ENCODE measurements at regions of chr3 and their contacts with region 1.

Region 1: GRCh38 chr3:42012935-42013690 is 51.2 kb upstream of the ULK4 start:
- DNase-seq: peak; percentile 66
- H3K4me3 Mint-ChIP-seq: peak overlapping the region; percentile 87
- H3K27ac Mint-ChIP-seq: peak overlapping the region; percentile 91
- H3K4me1 Mint-ChIP-seq: peaks cover 47% of the 10 kb centered on the region
- H3K27me3 Mint-ChIP-seq: no peaks in the 10 kb centered on the region

Region 2: GRCh38 chr3:40309418-40309924 is 1703.6 kb before region 1 on chr3 and contains the start of gene EIF1B:
- intact Hi-C with region 1: loop called (anchors 1 kb)
- DNase-seq: peak; percentile 98
- H3K4me3 Mint-ChIP-seq: peak within 1 kb of the TSS; percentile 96
- H3K27ac Mint-ChIP-seq: peak within 1 kb of the TSS; percentile 95
- H3K4me1 Mint-ChIP-seq: peaks cover 28% of the 10 kb centered on the region
- H3K27me3 Mint-ChIP-seq: no peaks in the 10 kb centered on the region
- total RNA-seq, gene EIF1B: 49.1 and 49.6 TPM in 2 replicates

Region 3: DNA sequence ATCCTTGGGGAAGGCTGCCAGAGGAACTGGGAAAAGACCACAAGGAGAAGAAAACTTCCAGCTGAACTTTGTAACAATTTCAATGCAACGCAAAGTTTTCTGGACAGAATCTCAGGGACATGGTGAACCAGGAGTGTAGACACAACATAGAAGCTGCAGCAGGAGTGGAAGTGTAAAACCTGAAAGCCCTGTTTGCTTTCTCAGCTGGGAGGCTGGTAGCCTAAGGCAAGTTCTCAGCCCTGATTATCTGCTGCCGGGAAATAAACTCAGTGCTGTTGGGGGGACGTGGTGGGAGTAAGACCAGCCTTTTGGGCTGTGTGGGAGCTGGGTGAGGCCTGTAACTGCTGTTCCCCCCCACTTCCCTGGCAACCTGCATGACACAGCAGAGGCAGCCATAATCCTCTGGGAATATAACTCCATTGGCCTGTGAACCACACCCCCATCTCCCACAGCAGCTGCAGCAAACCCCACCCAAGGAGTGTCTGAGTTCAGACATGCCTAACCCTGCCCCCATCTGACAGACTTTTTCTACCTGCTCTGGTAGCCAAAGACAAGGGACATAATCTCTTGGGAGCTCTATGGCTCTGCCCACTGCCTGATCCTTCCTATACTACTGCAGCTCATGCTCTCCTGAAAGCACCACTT is 1381.6 kb before region 1 on chr3:
- intact Hi-C with region 1: no loop called
- DNase-seq: no peak
- H3K4me3 Mint-ChIP-seq: no peak overlapping the region
- H3K27ac Mint-ChIP-seq: no peak overlapping the region
- H3K4me1 Mint-ChIP-seq: no peaks in the 10 kb centered on the region
- H3K27me3 Mint-ChIP-seq: no peaks in the 10 kb centered on the region

Region 4: GRCh38 chr3:40971191-40972168 is 1041.6 kb before region 1 on chr3:
- intact Hi-C with region 1: loop called (anchors 1 kb)
- DNase-seq: peak; percentile 24
- H3K4me3 Mint-ChIP-seq: peak overlapping the region; percentile 62
- H3K27ac Mint-ChIP-seq: peak overlapping the region; percentile 97
- H3K4me1 Mint-ChIP-seq: peaks cover 64% of the 10 kb centered on the region
- H3K27me3 Mint-ChIP-seq: peaks cover 2% of the 10 kb centered on the region

Region 5: DNA sequence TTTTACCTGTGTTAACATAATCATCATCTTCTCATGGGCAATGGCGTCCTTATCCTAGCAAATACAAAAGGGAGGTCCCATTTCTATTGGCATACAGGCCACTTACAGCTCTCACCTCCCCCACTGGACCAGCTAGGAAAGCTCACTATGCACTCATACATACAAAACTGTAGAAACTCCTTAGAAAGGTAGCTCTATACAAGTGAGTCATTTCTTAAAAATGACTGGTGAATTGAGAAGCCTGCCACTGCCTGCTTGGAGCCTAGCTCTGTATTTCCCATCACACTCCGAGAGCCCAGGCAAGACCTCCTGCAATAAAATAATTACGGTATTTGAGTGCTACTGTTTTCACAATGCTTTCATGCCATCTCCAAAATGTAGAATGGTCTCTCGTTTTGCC is 373.0 kb before region 1 on chr3:
- intact Hi-C with region 1: no loop called
- DNase-seq: no peak
- H3K4me3 Mint-ChIP-seq: no peak overlapping the region
- H3K27ac Mint-ChIP-seq: no peak overlapping the region
- H3K4me1 Mint-ChIP-seq: no peaks in the 10 kb centered on the region
- H3K27me3 Mint-ChIP-seq: no peaks in the 10 kb centered on the region

Region 6: DNA sequence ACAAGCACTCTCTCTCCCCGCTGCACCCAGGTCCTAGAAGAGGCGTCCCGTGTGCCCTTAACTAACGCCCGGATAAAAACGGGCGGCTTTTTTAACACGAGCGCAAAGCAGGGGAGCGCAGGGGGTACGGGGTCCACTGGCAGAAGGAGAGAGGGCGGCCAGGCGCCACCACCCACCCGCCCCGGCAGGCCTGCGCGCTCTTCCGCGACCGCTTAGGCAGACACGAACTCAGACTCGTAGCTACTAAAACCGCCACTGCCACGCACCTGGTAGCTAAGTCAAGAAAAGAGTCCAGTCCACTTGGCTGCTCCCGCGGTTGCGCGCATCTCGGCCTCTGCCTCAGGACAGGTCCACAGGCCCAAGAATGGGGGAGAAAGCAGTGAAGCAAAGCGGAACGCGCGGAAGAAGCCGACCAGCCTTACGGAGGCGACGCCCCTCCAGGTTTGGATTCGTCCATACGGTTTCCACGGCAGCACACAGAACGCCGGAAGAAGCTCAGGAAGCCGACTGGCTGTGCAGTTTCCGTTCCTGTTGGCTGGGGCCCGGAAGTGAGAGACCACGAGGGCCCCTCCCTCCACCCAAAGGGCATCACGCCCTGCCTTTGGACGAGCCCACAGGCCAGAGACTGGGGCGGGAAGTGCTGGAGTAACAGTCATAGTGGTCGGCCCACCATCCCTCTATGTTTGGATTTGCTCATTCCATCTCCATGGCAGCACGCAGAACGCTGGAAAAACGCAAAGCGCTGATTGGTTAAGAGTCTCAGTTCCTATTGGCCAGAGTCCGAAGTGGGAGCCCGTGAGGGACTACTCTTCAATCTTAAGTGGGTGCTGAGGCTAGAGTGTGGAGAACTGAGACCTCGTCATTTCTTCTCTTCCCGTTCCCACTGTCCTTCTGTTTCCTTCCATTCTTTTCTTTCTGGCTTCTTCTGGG is 51.1 kb before region 1 on chr3 and contains the start of gene ULK4:
- intact Hi-C with region 1: loop called (anchors 1 kb)
- DNase-seq: peak; percentile 95
- H3K4me3 Mint-ChIP-seq: peak within 1 kb of the TSS; percentile 95
- H3K27ac Mint-ChIP-seq: peak within 1 kb of the TSS; percentile 93
- H3K4me1 Mint-ChIP-seq: peaks cover 16% of the 10 kb centered on the region
- H3K27me3 Mint-ChIP-seq: peaks cover 2% of the 10 kb centered on the region
- total RNA-seq, gene ULK4: 7.3 and 8.1 TPM in 2 replicates

Region 7: DNA sequence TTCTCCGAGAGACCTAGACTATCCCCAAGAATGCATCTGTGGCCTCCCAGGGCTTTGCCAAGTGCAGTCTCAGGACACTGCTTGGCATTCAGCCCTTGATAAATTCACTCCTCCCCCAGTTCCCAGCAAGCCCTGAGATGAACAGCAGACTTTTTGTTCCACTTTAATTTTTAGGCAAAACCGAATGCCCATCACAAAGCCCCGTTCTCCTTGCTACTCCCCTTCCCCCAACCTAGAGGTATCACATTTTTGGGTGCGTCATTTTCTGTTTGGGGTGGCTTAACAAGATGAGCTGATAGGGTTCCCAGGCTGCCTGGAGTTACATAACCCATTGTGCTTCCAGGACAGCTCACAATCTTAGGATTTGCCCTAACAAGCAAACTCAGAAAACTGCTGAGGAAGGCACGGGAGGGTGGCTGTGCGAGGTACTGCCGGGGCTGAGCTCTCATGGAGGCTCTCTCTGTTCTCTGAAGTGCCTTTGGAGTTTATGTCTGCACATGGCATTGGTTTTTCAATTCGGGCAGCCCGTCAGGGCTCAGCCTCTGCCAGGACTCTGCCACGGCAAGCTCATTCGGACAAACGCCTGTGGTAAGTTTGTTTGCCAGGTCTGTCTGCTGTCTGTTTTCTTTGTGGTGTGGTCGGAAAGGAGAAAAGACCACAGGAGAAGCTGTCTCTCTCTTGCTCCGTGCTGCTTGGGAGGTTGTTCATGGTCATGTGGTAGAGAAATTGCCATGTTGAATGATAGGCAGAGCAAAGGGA is 78.0 kb after region 1 on chr3 and contains the start of gene TRAK1:
- intact Hi-C with region 1: loop called (anchors 2 kb)
- DNase-seq: no peak
- H3K4me3 Mint-ChIP-seq: peak within 1 kb of the TSS; percentile 11
- H3K27ac Mint-ChIP-seq: peak within 1 kb of the TSS; percentile 64
- H3K4me1 Mint-ChIP-seq: peaks cover 53% of the 10 kb centered on the region
- H3K27me3 Mint-ChIP-seq: no peaks in the 10 kb centered on the region
- total RNA-seq, gene TRAK1: 32.6 and 33.8 TPM in 2 replicates

Region 8: GRCh38 chr3:42179110-42179725 is 166.1 kb after region 1 on chr3:
- intact Hi-C with region 1: loop called (anchors 5 kb)
- DNase-seq: no peak
- H3K4me3 Mint-ChIP-seq: no peak overlapping the region
- H3K27ac Mint-ChIP-seq: peak overlapping the region; percentile 49
- H3K4me1 Mint-ChIP-seq: peaks cover 9% of the 10 kb centered on the region
- H3K27me3 Mint-ChIP-seq: no peaks in the 10 kb centered on the region

Region 9: GRCh38 chr3:43087249-43087776 is 1074.2 kb after region 1 on chr3:
- intact Hi-C with region 1: no loop called
- DNase-seq: no peak
- H3K4me3 Mint-ChIP-seq: no peak overlapping the region
- H3K27ac Mint-ChIP-seq: no peak overlapping the region
- H3K4me1 Mint-ChIP-seq: peaks cover 7% of the 10 kb centered on the region
- H3K27me3 Mint-ChIP-seq: no peaks in the 10 kb centered on the region